ENCODE measurements at regions of chr9 and their contacts with region 1.

Region 1: DNA sequence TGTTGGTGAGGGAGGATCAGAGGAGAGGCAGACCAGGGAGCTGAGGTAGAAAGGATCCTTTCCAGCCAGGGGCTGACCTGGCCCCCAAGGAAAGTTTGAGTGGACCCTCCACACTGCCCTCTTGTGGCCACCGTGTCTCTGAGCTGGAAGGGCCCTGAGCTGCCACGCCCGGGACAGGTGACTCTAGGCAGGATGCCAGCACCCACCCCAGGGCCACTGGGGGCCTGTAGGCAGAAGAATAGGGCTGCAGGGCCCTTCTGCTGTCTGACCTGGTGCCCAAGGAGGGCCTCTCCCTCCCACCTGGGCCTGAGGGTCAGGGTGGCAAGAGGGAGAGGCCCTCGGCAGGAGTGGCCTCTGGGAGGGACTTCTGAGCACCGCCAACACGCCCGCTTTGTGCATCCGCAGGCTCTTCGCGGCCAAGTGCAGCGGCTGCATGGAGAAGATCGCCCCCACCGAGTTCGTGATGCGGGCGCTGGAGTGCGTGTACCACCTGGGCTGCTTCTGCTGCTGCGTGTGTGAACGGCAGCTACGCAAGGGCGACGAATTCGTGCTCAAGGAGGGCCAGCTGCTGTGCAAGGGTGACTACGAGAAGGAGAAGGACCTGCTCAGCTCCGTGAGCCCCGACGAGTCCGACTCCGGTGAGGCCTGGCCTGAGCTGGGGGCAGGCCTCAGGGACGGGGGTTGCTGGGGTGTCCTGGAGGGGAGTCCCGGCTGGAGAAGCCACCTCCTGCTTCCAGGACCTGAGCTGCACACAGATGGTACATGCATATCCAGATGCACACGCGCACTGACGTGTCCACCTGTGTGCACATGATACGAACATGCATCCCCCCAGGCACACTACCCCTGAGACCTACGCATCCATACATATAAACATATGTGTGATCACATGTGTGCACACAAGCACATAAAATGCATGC is 77.0 kb downstream of the LMX1B start:
- DNase-seq: peak; percentile 71
- ATAC-seq: peak; percentile 79
- H3K4me3 Mint-ChIP-seq: no peak overlapping the region
- H3K27ac Mint-ChIP-seq: no peak overlapping the region
- H3K4me1 Mint-ChIP-seq: no peaks in the 10 kb centered on the region
- H3K27me3 Mint-ChIP-seq: peaks cover 21% of the 10 kb centered on the region

Region 2: GRCh38 chr9:126550891-126551351 is 139.8 kb before region 1 on chr9:
- CTCF ChIA-PET with region 1: no interaction called
- DNase-seq: no peak
- ATAC-seq: no peak
- H3K4me3 Mint-ChIP-seq: no peak overlapping the region
- H3K27ac Mint-ChIP-seq: no peak overlapping the region
- H3K4me1 Mint-ChIP-seq: no peaks in the 10 kb centered on the region
- H3K27me3 Mint-ChIP-seq: peaks cover 5% of the 10 kb centered on the region

Region 3: DNA sequence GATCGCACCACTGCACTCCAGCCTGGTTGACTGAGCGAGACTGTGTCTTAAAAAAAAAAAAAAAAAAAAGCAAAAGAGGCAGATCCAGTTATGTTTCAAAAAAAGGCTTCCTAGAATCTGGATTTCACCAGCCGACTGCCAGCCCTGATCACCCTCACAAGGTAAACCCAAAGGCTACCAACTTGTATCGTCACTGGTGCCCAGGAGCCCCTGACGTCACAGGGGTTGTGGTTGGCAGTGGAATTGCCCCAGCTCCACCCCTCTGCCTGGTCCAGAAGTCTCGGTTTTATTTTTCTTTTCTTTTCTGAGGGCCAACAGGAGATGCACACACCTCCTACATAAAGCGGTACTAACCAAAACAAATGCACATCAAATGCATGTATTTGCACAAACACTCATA is 83.0 kb before region 1 on chr9:
- CTCF ChIA-PET with region 1: interaction called, 20 read pairs
- DNase-seq: no peak
- ATAC-seq: no peak
- H3K4me3 Mint-ChIP-seq: no peak overlapping the region
- H3K27ac Mint-ChIP-seq: no peak overlapping the region
- H3K4me1 Mint-ChIP-seq: peaks cover 11% of the 10 kb centered on the region
- H3K27me3 Mint-ChIP-seq: peaks cover 67% of the 10 kb centered on the region

Region 4: GRCh38 chr9:126678989-126679388 is 11.7 kb before region 1 on chr9:
- CTCF ChIA-PET with region 1: interaction called, 10 read pairs
- DNase-seq: no peak
- ATAC-seq: no peak
- H3K4me3 Mint-ChIP-seq: no peak overlapping the region
- H3K27ac Mint-ChIP-seq: no peak overlapping the region
- H3K4me1 Mint-ChIP-seq: peaks cover 5% of the 10 kb centered on the region
- H3K27me3 Mint-ChIP-seq: peaks cover 81% of the 10 kb centered on the region